ENCODE measurements at regions of chr9 and their contacts with region 1.

Region 1: DNA sequence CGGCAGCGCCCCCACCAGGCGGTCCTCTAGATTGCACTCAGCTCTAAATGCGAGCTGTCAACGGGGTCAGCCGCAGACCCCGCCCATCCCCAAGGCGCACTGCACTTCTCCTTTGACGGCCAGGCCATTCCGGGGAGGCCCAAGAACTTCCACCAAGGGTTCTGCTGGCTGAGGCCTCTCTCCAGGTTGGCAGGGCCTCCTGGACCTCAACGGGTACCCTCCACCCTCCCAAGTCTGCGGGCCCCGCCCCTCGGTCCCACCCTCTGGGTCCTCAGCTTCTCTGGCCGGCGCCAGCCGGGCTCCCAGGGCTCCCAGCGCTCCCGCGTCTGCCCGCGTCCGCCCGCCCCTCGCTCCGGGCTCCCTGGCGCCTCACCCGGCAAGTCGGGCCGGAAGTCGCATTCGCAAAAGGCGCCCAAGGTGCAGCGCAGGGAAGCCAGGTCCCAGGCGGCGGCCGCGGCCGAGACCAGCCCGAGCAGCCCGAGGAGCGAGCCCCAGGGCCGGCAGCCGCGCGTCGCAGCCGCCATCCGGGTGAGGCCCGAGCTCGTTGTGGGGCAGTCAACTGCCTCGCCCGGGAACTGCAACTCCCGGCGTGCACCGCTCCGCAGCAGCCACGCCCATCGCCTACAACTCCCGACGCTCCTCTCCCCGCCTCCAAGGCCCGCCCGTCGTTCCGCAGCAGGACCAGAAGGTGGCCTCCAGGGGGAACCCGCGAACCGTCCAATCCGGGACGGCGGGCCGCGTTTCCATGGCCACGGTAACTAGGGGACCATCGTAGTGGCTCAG is at the start of gene TOR2A:
- DNase-seq: peak; percentile 97 to 100 (median 98)
- ATAC-seq: peak; percentile 93
- H3K4me3 ChIP-seq: peak within 1 kb of the TSS; percentile 61
- H3K4me3 Mint-ChIP-seq: peak within 1 kb of the TSS; percentile 99
- H3K27ac ChIP-seq: peak within 1 kb of the TSS; percentile 73 to 75
- H3K27ac Mint-ChIP-seq: peak within 1 kb of the TSS; percentile 83
- H3K4me1 ChIP-seq: peaks cover 22% of the 10 kb centered on the region
- H3K4me1 Mint-ChIP-seq: peaks cover 16% of the 10 kb centered on the region
- H3K27me3 ChIP-seq: no peaks in the 10 kb centered on the region
- H3K27me3 Mint-ChIP-seq: no peaks in the 10 kb centered on the region
- CTCF ChIP-seq: peak; percentile 81
- total RNA-seq, gene TOR2A: 7.6 to 8.2 TPM

Region 2: GRCh38 chr9:126939821-126940221 is 795.1 kb before region 1 on chr9:
- CTCF ChIA-PET with region 1: no interaction called
- POLR2A ChIA-PET with region 1: no interaction called
- intact Hi-C with region 1: loop called in 1 of 2 experiments (anchors 2 kb)
- DNase-seq: no peak
- ATAC-seq: no peak
- H3K4me3 ChIP-seq: no peak overlapping the region
- H3K4me3 Mint-ChIP-seq: no peak overlapping the region
- H3K27ac ChIP-seq: no peak overlapping the region
- H3K27ac Mint-ChIP-seq: no peak overlapping the region
- H3K4me1 ChIP-seq: peaks cover 2% of the 10 kb centered on the region
- H3K4me1 Mint-ChIP-seq: peaks cover 6% of the 10 kb centered on the region
- H3K27me3 ChIP-seq: peaks cover 3 to 4% of the 10 kb centered on the region in 2 experiments
- H3K27me3 Mint-ChIP-seq: peaks cover 13% of the 10 kb centered on the region
- CTCF ChIP-seq: no peak

Region 3: DNA sequence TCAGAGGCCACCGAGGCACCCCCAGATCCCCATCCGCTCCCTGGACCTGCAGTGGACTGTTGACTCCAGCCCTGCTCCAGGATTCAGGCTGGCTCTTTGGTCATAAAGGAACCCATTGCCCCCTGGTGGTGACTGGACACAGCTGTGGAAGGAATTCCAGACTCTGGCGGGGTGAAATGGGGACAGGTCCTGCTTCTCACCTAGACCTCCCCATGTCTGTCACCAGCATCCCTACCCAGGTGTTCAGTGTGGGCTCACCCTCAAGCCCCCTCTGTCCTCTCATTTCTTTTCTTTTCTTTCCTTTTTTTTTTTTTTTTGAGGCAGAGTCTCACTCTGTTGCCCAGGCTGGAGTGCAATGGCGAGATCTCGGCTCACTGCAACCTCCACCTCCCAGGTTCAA is 148.4 kb before region 1 on chr9:
- CTCF ChIA-PET with region 1: interaction called, 9 read pairs
- POLR2A ChIA-PET with region 1: interaction called, 8 read pairs
- intact Hi-C with region 1: loop called (anchors 1 kb)
- DNase-seq: peak; percentile 33 to 82 (median 52)
- ATAC-seq: peak; percentile 43
- H3K4me3 ChIP-seq: no peak overlapping the region
- H3K4me3 Mint-ChIP-seq: no peak overlapping the region
- H3K27ac ChIP-seq: no peak overlapping the region
- H3K27ac Mint-ChIP-seq: no peak overlapping the region
- H3K4me1 ChIP-seq: peaks cover 4% of the 10 kb centered on the region
- H3K4me1 Mint-ChIP-seq: no peaks in the 10 kb centered on the region
- H3K27me3 ChIP-seq: no peaks in the 10 kb centered on the region
- H3K27me3 Mint-ChIP-seq: peaks cover 20% of the 10 kb centered on the region
- CTCF ChIP-seq: peak; percentile 65

Region 4: DNA sequence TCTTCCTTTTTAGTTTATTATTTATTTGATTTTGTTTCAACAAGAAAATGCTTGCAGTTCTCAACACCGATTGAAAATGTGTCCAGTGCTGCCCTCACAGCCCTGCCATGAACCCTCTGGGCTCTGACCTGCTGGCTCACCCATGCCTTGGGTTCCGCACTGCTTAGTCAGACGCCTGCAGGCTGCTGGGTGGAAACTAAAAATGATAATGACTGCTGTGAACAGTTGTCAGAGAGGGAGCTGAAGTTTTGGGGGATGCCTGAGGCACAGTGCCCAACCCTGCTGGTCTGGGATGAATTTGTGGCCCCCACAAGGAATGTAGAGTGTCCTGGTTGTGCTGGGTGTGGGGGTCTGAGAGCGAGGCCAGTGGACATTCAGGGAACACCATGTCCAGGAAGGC is 50.4 kb before region 1 on chr9:
- CTCF ChIA-PET with region 1: no interaction called
- POLR2A ChIA-PET with region 1: no interaction called
- intact Hi-C with region 1: no loop called
- DNase-seq: no peak
- ATAC-seq: no peak
- H3K4me3 ChIP-seq: no peak overlapping the region
- H3K4me3 Mint-ChIP-seq: no peak overlapping the region
- H3K27ac ChIP-seq: no peak overlapping the region
- H3K27ac Mint-ChIP-seq: no peak overlapping the region
- H3K4me1 ChIP-seq: no peaks in the 10 kb centered on the region
- H3K4me1 Mint-ChIP-seq: no peaks in the 10 kb centered on the region
- H3K27me3 ChIP-seq: no peaks in the 10 kb centered on the region
- H3K27me3 Mint-ChIP-seq: no peaks in the 10 kb centered on the region
- CTCF ChIP-seq: no peak

Region 5: DNA sequence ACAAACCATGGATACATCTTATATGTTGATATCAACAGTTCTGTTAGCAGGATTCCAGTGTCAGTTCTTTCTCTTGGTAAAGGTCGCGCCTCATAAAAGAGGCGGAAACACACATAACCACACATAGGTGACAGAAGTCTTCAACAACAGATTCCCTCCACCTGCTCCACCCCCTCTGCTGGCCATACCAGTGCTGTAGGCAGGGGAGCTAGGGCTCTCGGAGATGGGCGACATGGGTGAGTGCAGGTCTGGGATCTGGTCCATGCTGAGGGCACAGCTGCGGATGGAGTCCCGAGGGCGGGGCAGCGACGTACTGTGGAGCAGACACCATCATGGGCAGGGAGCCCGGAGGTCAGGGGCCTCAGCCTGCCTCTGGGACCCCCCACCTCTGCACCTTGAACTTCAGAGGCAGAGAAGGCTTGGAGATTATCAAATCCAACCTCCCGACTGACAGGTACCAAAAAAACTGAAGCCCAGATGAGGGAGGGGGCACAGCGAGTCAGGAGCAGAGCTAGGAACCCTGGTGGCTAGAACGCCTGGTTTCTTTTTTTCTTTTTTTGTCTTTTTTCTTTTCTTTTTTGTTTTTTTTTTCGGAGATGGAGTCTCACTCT is 12.1 kb after region 1 on chr9:
- CTCF ChIA-PET with region 1: interaction called, 23 read pairs
- POLR2A ChIA-PET with region 1: no interaction called
- intact Hi-C with region 1: no loop called
- DNase-seq: peak in 9 of 14 experiments; percentile 24 to 68 (median 35)
- ATAC-seq: peak; percentile 87
- H3K4me3 ChIP-seq: no peak overlapping the region
- H3K4me3 Mint-ChIP-seq: peak overlapping the region; percentile 13
- H3K27ac ChIP-seq: no peak overlapping the region
- H3K27ac Mint-ChIP-seq: peak overlapping the region; percentile 73
- H3K4me1 ChIP-seq: peaks cover 9% of the 10 kb centered on the region
- H3K4me1 Mint-ChIP-seq: peaks cover 9% of the 10 kb centered on the region
- H3K27me3 ChIP-seq: no peaks in the 10 kb centered on the region
- H3K27me3 Mint-ChIP-seq: no peaks in the 10 kb centered on the region
- CTCF ChIP-seq: no peak

Region 6: GRCh38 chr9:127779136-127779981 is 44.4 kb after region 1 on chr9:
- CTCF ChIA-PET with region 1: interaction called, 43 read pairs
- POLR2A ChIA-PET with region 1: interaction called, 40 read pairs
- intact Hi-C with region 1: no loop called
- DNase-seq: peak in 5 of 14 experiments; percentile 22 to 84 (median 65)
- ATAC-seq: peak; percentile 9
- H3K4me3 ChIP-seq: peak overlapping the region; percentile 80
- H3K4me3 Mint-ChIP-seq: peak overlapping the region; percentile 96
- H3K27ac ChIP-seq: peak overlapping the region; percentile 86 to 90
- H3K27ac Mint-ChIP-seq: peak overlapping the region; percentile 97
- H3K4me1 ChIP-seq: peaks cover 88% of the 10 kb centered on the region
- H3K4me1 Mint-ChIP-seq: peaks cover 72% of the 10 kb centered on the region
- H3K27me3 ChIP-seq: no peaks in the 10 kb centered on the region
- H3K27me3 Mint-ChIP-seq: no peaks in the 10 kb centered on the region
- CTCF ChIP-seq: no peak

Region 7: GRCh38 chr9:127904561-127905003 is 169.6 kb after region 1 on chr9:
- CTCF ChIA-PET with region 1: interaction called, 8 read pairs
- POLR2A ChIA-PET with region 1: interaction called, 9 read pairs
- intact Hi-C with region 1: loop called in 1 of 2 experiments (anchors 5 kb)
- DNase-seq: peak in 3 of 14 experiments; percentile 37 to 51 (median 40)
- ATAC-seq: no peak
- H3K4me3 ChIP-seq: peak overlapping the region; percentile 63
- H3K4me3 Mint-ChIP-seq: peak overlapping the region; percentile 89
- H3K27ac ChIP-seq: peak overlapping the region; percentile 95 to 98
- H3K27ac Mint-ChIP-seq: peak overlapping the region; percentile 98
- H3K4me1 ChIP-seq: peaks cover 66% of the 10 kb centered on the region
- H3K4me1 Mint-ChIP-seq: peaks cover 61% of the 10 kb centered on the region
- H3K27me3 ChIP-seq: no peaks in the 10 kb centered on the region
- H3K27me3 Mint-ChIP-seq: no peaks in the 10 kb centered on the region
- CTCF ChIP-seq: no peak